ENCODE measurements at regions of chr3 and their contacts with region 1.

Region 1: DNA sequence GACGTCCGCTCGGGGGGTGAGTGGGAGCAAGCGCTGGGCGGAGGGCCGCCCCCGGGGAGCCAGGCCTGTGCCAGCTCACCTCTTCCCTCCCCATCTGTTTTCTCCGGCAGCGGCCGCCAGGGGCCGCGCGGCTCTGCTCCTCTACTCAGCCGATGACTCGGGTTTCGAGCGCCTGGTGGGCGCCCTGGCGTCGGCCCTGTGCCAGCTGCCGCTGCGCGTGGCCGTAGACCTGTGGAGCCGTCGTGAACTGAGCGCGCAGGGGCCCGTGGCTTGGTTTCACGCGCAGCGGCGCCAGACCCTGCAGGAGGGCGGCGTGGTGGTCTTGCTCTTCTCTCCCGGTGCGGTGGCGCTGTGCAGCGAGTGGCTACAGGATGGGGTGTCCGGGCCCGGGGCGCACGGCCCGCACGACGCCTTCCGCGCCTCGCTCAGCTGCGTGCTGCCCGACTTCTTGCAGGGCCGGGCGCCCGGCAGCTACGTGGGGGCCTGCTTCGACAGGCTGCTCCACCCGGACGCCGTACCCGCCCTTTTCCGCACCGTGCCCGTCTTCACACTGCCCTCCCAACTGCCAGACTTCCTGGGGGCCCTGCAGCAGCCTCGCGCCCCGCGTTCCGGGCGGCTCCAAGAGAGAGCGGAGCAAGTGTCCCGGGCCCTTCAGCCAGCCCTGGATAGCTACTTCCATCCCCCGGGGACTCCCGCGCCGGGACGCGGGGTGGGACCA is 632 bp upstream of the CRELD1 start:
- DNase-seq: peak; percentile 94
- H3K4me3 Mint-ChIP-seq: peak overlapping the region; percentile 96
- H3K27ac Mint-ChIP-seq: peak overlapping the region; percentile 96
- H3K4me1 Mint-ChIP-seq: peaks cover 36% of the 10 kb centered on the region
- H3K27me3 Mint-ChIP-seq: no peaks in the 10 kb centered on the region

Region 2: DNA sequence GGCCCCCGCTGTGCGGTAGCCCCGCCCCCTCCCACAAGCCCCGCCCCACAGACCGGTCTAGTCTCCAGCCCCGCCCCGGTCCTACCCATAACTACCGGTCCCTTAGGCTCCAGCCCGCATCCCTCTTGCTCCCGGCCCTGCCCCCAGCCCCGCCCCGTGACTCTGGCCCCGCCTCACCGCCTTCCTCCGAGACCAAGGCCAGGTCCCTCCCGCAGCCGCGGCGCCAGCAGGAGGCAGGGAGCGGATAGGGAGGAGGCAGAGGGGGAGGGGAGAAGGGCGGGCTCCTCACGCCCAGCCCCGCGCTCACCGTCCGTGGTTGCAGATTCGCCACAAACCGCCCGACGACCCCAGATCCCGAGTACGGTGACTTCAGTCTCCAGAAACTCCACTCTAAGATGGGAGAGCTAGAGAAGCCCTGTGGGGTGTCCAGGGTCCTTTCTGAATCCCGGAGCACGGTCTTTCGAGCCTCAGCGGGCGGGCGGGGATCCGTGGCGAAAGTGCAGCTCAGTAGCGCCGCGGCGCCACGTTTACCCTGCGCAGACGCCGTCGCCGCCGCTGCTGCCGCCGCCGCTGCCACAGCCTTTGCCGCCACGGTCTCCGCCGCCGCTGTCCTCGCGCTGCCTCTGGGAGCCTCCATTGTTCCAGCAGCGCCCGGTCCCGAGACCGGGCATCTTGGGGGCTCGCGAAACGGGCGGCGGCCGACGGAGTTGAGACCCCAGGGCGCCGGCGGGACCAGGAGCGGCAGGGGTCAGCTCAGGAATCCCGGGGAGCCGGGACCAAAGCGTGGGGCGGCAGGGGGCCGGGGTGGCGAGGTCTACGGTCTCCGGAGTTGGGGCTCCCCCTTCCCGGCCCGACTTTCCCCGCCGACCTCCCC is 201.6 kb before region 1 on chr3 and contains the start of gene BRPF1:
- intact Hi-C with region 1: loop called (anchors 1 kb)
- DNase-seq: peak; percentile 98
- H3K4me3 Mint-ChIP-seq: peak within 1 kb of the TSS; percentile 87
- H3K27ac Mint-ChIP-seq: peak within 1 kb of the TSS; percentile 95
- H3K4me1 Mint-ChIP-seq: peaks cover 65% of the 10 kb centered on the region
- H3K27me3 Mint-ChIP-seq: no peaks in the 10 kb centered on the region
- total RNA-seq, gene BRPF1: 41.7 and 45.3 TPM in 2 replicates

Region 3: GRCh38 chr3:9843715-9844438 is 89.1 kb before region 1 on chr3 and contains the start of gene RPUSD3:
- intact Hi-C with region 1: loop called (anchors 2 kb)
- DNase-seq: peak; percentile 99
- H3K4me3 Mint-ChIP-seq: peak within 1 kb of the TSS; percentile 99
- H3K27ac Mint-ChIP-seq: peak within 1 kb of the TSS; percentile 98
- H3K4me1 Mint-ChIP-seq: peaks cover 26% of the 10 kb centered on the region
- H3K27me3 Mint-ChIP-seq: no peaks in the 10 kb centered on the region
- total RNA-seq, gene RPUSD3: 84.3 and 85.7 TPM in 2 replicates

Region 4: GRCh38 chr3:9946112-9947024 is 13.4 kb after region 1 on chr3:
- intact Hi-C with region 1: loop called (anchors 1 kb)
- DNase-seq: peak; percentile 97
- H3K4me3 Mint-ChIP-seq: peak overlapping the region; percentile 91
- H3K27ac Mint-ChIP-seq: peak overlapping the region; percentile 87
- H3K4me1 Mint-ChIP-seq: peaks cover 13% of the 10 kb centered on the region
- H3K27me3 Mint-ChIP-seq: no peaks in the 10 kb centered on the region

Region 5: GRCh38 chr3:10099041-10099440 is 166.0 kb after region 1 on chr3:
- intact Hi-C with region 1: no loop called
- DNase-seq: no peak
- H3K4me3 Mint-ChIP-seq: no peak overlapping the region
- H3K27ac Mint-ChIP-seq: no peak overlapping the region
- H3K4me1 Mint-ChIP-seq: no peaks in the 10 kb centered on the region
- H3K27me3 Mint-ChIP-seq: no peaks in the 10 kb centered on the region

Region 6: DNA sequence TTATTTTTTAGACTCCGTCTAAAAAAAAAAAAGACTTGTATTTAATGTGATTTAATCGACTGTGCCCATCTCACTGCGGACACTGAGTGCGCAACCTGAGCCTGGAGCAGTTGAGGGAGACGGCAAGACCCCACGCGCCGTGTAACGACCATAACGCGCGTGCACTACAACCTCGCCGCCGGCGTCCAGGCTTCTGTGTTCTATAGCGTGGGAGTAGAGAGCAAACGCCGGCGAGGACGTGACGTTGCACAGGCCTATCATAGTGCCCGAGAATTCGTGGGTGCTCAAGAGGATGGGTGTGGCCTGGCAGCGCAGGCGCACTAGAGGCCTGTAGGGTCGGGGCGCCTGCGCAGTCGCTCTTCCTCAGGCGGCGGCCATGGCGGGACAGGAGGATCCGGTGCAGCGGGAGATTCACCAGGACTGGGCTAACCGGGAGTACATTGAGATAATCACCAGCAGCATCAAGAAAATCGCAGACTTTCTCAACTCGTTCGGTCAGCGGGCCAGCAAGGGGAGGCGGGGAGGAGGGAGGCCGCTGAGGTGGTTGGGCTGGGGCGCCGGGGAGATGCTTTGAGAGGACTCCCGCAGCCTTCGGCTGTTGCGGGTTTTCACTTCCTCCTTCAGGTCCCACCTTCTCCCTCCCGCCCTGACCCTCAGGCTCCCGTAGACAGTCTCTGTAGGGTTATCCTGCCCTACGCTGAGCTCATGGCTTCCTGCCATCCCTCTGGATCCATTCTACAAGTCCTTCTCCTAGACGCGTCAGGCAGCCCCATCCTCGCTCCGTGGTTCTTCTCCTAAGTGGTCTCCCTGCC is 182.5 kb after region 1 on chr3 and contains the start of gene BRK1:
- intact Hi-C with region 1: loop called (anchors 5 kb)
- DNase-seq: peak; percentile 97
- H3K4me3 Mint-ChIP-seq: peak within 1 kb of the TSS; percentile 98
- H3K27ac Mint-ChIP-seq: peak within 1 kb of the TSS; percentile 93
- H3K4me1 Mint-ChIP-seq: peaks cover 25% of the 10 kb centered on the region
- H3K27me3 Mint-ChIP-seq: peaks cover 2% of the 10 kb centered on the region
- total RNA-seq, gene BRK1: 98.8 and 99.6 TPM in 2 replicates

Measured in activated CD4-positive, alpha-beta T cell treated with anti-CD3 and anti-CD28 coated beads, Interleukin-2, amount 10 ng/mL, durations not matched to agents 24 days and 14 days (primary cell).